Left colon (tissue), 2 donors: ENCODE measurements at regions of chr10 and their contacts with region 1.

Region 1: GRCh38 chr10:58952747-58953466 is 223.5 kb upstream of the PHYHIPL start:
- DNase-seq: peak in 1 of 2 donors; percentile 46
- ATAC-seq: peak; percentile 69

Region 2: DNA sequence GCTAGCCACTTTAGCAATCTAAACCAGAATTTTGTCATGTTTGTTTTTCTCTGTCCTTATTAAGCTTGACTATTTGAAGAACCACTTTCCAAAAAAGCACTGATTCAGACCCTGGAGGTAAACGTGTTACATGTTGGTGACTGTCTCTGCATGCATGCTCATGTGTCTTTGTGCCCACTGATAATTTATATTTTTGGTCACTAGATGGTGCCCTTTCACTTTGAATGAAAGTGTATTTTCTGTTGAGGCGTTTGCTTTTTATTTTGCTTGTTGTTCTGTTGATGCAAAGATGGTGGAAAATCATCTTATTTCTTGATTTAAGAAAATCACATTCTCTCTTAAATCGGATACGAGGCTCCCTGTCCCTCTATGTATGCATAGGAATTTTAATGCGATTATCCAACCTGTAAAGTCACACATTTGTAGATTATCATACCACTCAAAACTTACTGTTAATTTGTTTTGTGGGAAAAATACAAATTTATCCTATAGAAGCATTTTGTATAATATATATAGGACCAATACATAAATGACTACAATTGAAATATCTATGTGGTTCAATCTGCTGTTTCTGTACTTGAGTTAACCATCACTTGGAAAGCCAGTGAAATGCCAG is 170.9 kb before region 1 on chr10:
- intact Hi-C with region 1: loop called in 1 of 2 experiments (anchors 10 kb)
- DNase-seq: no peak
- ATAC-seq: peak; percentile 40

Region 3: GRCh38 chr10:59036311-59037017 is 83.6 kb after region 1 on chr10:
- intact Hi-C with region 1: no loop called
- DNase-seq: no peak
- ATAC-seq: no peak